ENCODE measurements at regions of chr4 and their contacts with region 1.

Region 1: DNA sequence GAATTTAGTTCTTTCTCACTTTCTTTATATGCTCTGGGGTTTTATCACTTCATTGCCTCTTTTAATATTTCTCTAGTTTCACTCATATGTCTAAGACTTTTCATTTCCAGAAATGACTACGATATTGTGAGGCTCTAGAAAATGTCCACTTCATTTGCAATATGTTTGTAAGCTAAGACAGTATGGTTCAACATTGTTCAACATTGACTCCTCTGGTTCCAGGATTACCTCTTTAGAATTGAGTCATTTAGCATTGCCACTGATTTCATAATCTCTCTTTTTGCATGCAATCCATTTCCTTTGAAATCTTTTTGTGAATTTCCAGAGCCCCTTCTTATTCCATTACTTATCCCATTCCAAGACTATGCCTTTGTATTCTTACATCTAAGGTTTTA is 32.3 kb downstream of the BBS12 start:
- DNase-seq: no peak
- H3K4me3 Mint-ChIP-seq: peak overlapping the region; percentile 43
- H3K27ac Mint-ChIP-seq: peak overlapping the region; percentile 79
- H3K4me1 Mint-ChIP-seq: peaks cover 45% of the 10 kb centered on the region
- H3K27me3 Mint-ChIP-seq: no peaks in the 10 kb centered on the region

Region 2: GRCh38 chr4:122602277-122603142 is 162.3 kb before region 1 on chr4:
- intact Hi-C with region 1: loop called (anchors 1 kb)
- DNase-seq: no peak
- H3K4me3 Mint-ChIP-seq: peak overlapping the region; percentile 54
- H3K27ac Mint-ChIP-seq: peak overlapping the region; percentile 55
- H3K4me1 Mint-ChIP-seq: peaks cover 43% of the 10 kb centered on the region
- H3K27me3 Mint-ChIP-seq: no peaks in the 10 kb centered on the region

Region 3: DNA sequence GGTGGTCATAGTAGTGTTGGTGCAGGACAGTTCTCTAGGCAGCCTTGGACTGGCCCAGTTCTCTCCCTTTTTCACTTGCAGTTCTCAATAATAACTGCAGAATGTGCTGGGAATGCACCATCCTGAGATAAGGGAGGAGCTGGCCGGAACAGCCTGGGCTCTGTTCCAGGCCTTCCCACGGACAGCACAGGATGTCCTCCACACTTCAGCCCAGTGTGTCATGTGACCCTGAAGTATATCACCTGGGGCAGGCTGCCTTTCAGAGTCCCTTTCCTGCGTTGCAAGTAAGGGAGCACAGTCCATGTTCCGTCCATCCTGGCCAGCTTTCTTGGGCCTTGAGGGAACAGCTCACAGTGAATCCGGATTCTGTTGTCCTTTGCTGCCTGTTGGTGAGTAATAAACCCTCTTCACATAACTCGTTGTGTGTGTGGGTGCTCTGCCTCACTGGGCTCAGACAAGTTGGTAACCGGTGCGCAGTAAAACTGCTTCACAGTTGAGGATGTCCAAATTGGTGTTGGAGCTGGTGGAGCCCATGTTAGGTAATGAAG is 64.6 kb before region 1 on chr4:
- intact Hi-C with region 1: loop called (anchors 2 kb)
- DNase-seq: no peak
- H3K4me3 Mint-ChIP-seq: peak overlapping the region; percentile 81
- H3K27ac Mint-ChIP-seq: peak overlapping the region; percentile 95
- H3K4me1 Mint-ChIP-seq: peaks cover 70% of the 10 kb centered on the region
- H3K27me3 Mint-ChIP-seq: peaks cover 2% of the 10 kb centered on the region

Region 4: GRCh38 chr4:122732329-122733026 is 32.3 kb before region 1 on chr4 and contains the start of gene BBS12:
- intact Hi-C with region 1: loop called (anchors 1 kb)
- DNase-seq: peak; percentile 98
- H3K4me3 Mint-ChIP-seq: peak within 1 kb of the TSS; percentile 94
- H3K27ac Mint-ChIP-seq: peak within 1 kb of the TSS; percentile 95
- H3K4me1 Mint-ChIP-seq: peaks cover 37% of the 10 kb centered on the region
- H3K27me3 Mint-ChIP-seq: no peaks in the 10 kb centered on the region
- total RNA-seq, gene BBS12: 4.4 and 6.2 TPM in 2 replicates

Region 5: GRCh38 chr4:122783301-122784215 is 18.7 kb after region 1 on chr4:
- intact Hi-C with region 1: loop called (anchors 1 kb)
- DNase-seq: no peak
- H3K4me3 Mint-ChIP-seq: peak overlapping the region; percentile 13
- H3K27ac Mint-ChIP-seq: no peak overlapping the region
- H3K4me1 Mint-ChIP-seq: peaks cover 40% of the 10 kb centered on the region
- H3K27me3 Mint-ChIP-seq: peaks cover 11% of the 10 kb centered on the region

Region 6: DNA sequence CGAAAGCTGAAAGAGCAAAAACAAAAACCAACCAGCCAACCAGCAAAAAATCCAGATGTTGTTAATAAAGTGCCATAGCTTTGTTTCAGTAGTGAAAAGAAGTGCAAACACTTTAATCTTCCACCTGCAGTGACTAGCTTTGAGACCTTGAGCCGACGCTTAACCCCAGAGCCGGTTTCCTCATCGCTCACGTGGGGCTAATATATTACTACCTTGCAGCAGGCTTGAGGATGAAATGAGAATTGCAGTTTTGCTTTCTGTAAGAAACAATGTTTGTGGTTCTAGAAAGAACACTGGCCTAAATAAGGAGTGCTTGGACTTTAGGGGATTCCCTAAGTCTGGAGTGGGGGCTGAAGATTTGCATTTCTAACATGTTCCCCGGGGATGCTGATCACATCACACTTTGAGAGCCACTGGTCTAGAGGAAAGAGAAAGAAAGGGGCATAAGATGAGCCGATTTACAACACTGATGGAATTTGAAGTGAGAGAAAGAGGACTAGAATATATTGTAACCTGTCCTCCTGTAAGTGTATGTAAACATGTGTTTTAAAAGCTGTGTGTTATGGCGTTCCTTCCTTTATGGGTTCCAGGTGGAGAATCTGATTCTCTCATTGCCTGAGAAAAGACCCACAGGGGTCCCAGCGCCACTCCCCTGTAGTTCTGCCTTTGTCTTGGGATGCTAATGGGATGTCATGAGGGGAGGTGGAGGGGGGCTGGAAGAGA is 63.2 kb after region 1 on chr4:
- intact Hi-C with region 1: loop called (anchors 1 kb)
- DNase-seq: peak; percentile 40
- H3K4me3 Mint-ChIP-seq: peak overlapping the region; percentile 78
- H3K27ac Mint-ChIP-seq: peak overlapping the region; percentile 64
- H3K4me1 Mint-ChIP-seq: peaks cover 34% of the 10 kb centered on the region
- H3K27me3 Mint-ChIP-seq: peaks cover 39% of the 10 kb centered on the region

Region 7: DNA sequence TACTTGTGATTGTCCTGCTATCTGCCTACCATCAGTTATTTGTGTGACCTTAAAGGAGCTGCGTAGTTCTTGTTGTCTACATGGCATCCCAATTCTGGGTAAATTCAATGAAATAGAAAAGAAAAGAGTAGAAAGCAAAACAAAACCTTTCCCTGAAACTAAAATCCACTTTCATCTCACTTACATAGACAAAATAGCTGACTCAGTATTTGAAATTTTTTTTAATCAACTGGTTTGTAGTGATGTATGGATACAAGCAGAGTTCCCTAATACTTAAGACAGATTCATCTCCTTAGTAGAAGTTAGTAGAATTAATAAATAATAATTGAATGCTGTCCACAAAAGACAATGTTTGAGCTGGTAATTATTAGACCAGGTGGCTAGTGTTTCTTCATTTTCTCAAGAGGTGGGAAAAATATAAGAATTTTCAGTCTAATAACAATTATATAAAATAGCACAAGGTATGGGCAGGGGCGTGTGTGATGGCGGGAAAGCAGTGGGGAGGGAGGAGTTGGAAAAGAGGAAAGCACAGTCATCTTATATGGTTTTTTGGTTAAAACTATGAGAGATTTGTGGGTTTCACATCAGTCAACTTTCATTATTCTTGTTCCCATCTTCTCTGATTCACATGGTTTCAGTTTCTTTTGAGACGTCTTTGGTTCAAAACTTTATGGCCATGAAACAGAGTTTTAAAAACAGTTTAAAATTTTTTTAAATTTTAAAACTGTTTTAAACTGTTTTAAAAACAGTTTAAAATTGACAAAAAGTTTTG is 907.0 kb after region 1 on chr4:
- intact Hi-C with region 1: loop called (anchors 5 kb)
- DNase-seq: peak; percentile 14
- H3K4me3 Mint-ChIP-seq: no peak overlapping the region
- H3K27ac Mint-ChIP-seq: peak overlapping the region; percentile 7
- H3K4me1 Mint-ChIP-seq: peaks cover 43% of the 10 kb centered on the region
- H3K27me3 Mint-ChIP-seq: peaks cover 46% of the 10 kb centered on the region